ENCODE measurements at regions of chr11 and their contacts with region 1.

Region 1: GRCh38 chr11:6737872-6738466 is 33.8 kb downstream of the OR2AG2 start:
- DNase-seq: peak; percentile 11
- H3K4me3 ChIP-seq: no peak overlapping the region; a peak in 1 of 4 replicates
- H3K27ac ChIP-seq: no peak overlapping the region
- H3K4me1 ChIP-seq: no peaks in the 10 kb centered on the region
- H3K27me3 ChIP-seq: no peaks in the 10 kb centered on the region; the same call in 1 of the 2 replicates
- CTCF ChIP-seq: peak; percentile 71
- EP300 ChIP-seq: no peak
- RAD21 ChIP-seq: peak; percentile 42

Region 2: GRCh38 chr11:6612213-6613041 is 125.5 kb before region 1 on chr11 and contains the start of gene TAF10:
- CTCF ChIA-PET with region 1: no interaction called
- POLR2A ChIA-PET with region 1: no interaction called
- DNase-seq: peak; percentile 95
- H3K4me3 ChIP-seq: peak within 1 kb of the TSS; percentile 65 to 93
- H3K27ac ChIP-seq: peak within 1 kb of the TSS; percentile 94 to 99
- H3K4me1 ChIP-seq: peaks cover 10 to 32% of the 10 kb centered on the region in 2 experiments
- H3K27me3 ChIP-seq: no peaks in the 10 kb centered on the region
- CTCF ChIP-seq: peak; percentile 62
- EP300 ChIP-seq: no peak
- RAD21 ChIP-seq: no peak
- polyA plus RNA-seq, gene TAF10: 163 and 213 TPM in 2 replicates

Region 3: DNA sequence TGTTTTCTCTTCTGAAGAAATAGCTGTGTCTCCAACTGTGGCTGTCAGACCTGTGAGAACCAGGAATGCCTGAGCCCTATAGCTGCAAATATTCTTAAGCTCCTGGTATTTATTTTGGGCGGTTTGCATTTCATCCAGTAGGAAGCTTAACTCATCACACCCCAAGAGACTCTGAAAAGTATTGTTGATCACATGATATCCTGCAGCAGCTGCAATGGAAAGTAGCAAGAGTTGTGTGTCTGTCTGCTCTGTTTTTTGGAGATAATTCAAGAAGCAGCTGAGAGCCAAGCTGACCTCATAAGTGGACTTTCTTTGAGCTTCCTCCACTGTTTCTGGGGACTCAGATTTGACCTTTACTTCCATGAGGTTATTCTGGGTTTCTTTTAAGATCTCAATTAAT is 18.4 kb before region 1 on chr11:
- CTCF ChIA-PET with region 1: interaction called, 19 read pairs
- POLR2A ChIA-PET with region 1: no interaction called
- DNase-seq: no peak
- H3K4me3 ChIP-seq: no peak overlapping the region
- H3K27ac ChIP-seq: no peak overlapping the region
- H3K4me1 ChIP-seq: no peaks in the 10 kb centered on the region
- H3K27me3 ChIP-seq: peaks cover 26% of the 10 kb centered on the region; the same call in 1 of the 2 replicates
- CTCF ChIP-seq: no peak
- EP300 ChIP-seq: no peak
- RAD21 ChIP-seq: no peak

Measured in SK-N-SH (cell line).